Common myeloid progenitor, CD34-positive (primary cell): ENCODE measurements at regions of chrX and their contacts with region 1.

Region 1: GRCh38 chrX:135740683-135741149 is 27.3 kb downstream of the CT45A3 start:
- DNase-seq: peak; percentile 51 to 75 (median 72)
- H3K4me3 ChIP-seq: peak overlapping the region in 5 of 7 experiments; percentile 32 to 73 (median 50)
- H3K27ac ChIP-seq: no peak overlapping the region
- H3K4me1 ChIP-seq: peaks cover 0 to 3% (median 0%) of the 10 kb centered on the region in 4 experiments
- H3K27me3 ChIP-seq: no peaks in the 10 kb centered on the region

Region 2: DNA sequence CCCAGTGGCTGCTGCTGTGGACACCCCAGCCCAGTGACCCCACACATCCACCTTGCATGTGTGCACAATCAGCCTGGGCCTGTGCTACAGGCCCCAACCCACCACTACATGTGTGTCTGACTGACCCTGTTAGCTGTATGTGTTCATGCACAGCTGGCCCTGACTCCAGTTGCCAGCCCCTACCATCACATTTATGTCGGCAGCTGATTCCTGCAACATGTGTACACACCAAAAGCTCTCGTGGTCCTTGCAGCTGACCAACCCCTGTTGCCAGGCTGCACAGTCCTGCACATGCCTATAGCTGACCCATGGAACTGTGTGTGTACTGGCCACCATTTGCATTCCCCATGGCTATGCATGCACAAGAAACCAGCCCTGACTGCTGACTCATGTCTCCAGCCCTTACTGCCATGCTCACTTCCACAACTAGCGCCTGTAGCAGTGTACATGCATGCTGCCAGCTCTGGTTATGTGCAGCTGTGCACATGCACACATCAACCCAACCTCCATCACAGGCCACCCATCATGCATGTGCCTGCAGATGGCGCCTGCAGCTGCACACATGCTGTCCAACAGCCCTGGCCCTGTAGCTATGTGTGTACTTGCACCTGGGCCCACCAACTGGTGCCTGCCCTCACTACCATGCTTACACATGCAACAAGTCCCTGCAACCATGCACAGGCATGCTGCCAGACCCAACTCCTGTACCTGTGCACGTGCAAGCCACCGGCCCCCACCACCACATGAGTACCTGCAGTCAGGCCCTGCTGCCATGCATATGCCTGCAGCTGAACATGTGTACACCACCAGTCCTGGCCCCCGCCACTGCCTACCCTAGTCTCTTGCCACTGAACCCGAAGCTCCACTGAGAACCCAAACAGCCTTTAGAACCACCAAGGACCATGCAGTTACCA is 290.8 kb before region 1 on chrX:
- CTCF ChIA-PET with region 1: no interaction called
- POLR2A ChIA-PET with region 1: no interaction called
- DNase-seq: no peak
- H3K4me3 ChIP-seq: no peak overlapping the region
- H3K27ac ChIP-seq: no peak overlapping the region
- H3K4me1 ChIP-seq: no peaks in the 10 kb centered on the region
- H3K27me3 ChIP-seq: no peaks in the 10 kb centered on the region

Region 3: DNA sequence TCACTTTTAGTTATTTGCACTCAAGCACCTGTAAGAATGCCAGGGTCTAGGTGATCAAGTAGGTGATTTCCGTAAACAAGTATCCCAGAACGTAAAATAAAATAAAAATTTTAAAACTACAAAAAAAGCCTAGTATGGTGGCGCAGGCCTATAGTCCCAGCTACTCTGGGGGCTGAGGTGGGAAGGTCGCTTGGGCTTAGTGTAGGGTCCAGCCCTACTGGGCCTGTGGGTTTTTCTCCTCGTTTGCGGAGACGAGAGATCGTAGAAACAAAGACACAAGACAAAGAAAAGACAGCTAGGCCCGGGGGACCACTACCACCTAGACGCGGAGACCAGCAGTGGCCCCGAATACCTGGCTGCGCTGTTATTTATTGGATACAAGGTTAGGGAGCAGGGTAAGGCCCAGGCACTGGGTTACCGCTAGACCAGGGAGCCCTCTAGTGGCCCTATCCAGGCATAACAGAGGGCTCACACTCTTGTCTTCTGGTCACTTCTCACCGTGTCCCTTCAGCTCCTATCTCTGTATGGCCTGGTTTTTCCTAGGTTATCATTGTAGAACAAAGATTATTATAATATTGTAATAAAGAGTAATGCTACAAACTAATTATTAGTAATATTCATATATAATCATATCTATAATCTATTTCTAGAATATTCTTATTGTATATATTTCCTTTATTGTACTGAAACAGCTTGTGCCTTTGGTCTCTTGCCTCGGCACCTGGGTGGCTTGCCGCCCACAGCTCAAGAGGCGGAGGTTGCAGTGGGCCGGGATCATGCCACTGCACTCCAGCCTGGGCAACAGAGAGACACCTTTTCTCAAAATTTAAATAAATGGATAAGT is 191.2 kb after region 1 on chrX:
- CTCF ChIA-PET with region 1: interaction called, 36 read pairs
- POLR2A ChIA-PET with region 1: no interaction called
- DNase-seq: peak; percentile 25 to 61 (median 49)
- H3K4me3 ChIP-seq: no peak overlapping the region
- H3K27ac ChIP-seq: no peak overlapping the region
- H3K4me1 ChIP-seq: no peaks in the 10 kb centered on the region
- H3K27me3 ChIP-seq: peaks cover 0 to 3% (median 0%) of the 10 kb centered on the region in 5 experiments